ENCODE measurements at regions of chr5 and their contacts with region 1.

Region 1: DNA sequence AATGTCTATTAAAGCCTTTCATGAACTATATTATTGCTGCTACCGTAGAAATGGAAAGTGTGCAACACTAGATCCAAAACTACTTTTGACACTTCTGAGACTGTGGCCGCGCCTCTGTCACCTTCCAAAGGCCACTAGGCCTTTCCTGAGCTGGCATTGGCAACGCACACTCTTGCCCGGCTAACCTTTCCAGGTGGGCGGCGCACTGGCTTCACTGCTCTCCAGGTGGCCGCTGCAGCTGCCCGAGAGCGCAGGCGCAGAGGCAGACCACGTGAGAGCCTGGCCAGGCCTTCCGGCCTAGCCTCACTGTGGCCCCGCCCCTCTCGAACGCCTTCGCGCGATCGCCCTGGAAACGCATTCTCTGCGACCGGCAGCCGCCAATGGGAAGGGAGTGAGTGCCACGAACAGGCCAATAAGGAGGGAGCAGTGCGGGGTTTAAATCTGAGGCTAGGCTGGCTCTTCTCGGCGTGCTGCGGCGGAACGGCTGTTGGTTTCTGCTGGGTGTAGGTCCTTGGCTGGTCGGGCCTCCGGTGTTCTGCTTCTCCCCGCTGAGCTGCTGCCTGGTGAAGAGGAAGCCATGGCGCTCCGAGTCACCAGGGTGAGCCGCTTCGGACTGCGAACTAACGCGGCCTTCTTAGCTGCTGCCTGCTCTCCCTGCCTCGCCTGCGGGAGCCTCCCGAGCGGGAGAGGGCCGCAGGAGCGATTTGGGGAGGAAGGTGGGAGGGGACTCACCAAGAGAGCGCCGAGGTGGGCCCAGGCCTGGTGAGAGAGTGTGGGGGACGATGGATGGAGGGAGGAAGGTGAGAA is at the start of gene CCNB1:
- DNase-seq: peak; percentile 99
- H3K4me3 ChIP-seq: peak within 1 kb of the TSS; percentile 88
- H3K27ac ChIP-seq: peak within 1 kb of the TSS; percentile 53
- H3K4me1 ChIP-seq: peaks cover 4% of the 10 kb centered on the region
- H3K27me3 ChIP-seq: no peaks in the 10 kb centered on the region
- CTCF ChIP-seq: no peak
- total RNA-seq, gene CCNB1: 43.1 to 189 TPM

Region 2: DNA sequence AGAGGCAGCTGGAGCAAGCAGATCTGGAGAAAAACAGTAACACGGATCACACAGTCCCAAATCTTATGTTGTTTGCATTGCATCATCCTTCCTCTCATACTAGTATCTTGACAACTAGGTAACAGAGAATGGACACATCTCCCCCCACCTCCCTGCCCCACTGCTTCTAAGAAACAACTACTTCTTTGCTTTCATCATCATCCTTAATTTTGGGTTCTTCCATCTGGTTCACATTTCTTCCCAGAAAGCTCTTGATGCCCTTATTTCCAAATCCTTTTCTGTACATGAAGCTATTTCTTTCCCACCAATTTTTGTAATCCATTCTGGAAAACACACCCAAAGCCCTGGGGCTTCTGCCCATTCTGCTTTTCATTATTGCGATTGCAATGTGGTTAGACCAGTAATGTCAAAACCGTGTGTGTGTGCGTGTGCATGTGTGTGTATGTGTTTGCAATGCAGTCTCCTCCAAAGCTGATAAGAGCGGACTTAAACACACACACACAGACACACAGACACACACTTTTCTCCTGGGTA is 327.8 kb before region 1 on chr5:
- intact Hi-C with region 1: no loop called
- DNase-seq: no peak
- H3K4me3 ChIP-seq: no peak overlapping the region
- H3K27ac ChIP-seq: no peak overlapping the region
- H3K4me1 ChIP-seq: no peaks in the 10 kb centered on the region
- H3K27me3 ChIP-seq: no peaks in the 10 kb centered on the region
- CTCF ChIP-seq: no peak

Region 3: DNA sequence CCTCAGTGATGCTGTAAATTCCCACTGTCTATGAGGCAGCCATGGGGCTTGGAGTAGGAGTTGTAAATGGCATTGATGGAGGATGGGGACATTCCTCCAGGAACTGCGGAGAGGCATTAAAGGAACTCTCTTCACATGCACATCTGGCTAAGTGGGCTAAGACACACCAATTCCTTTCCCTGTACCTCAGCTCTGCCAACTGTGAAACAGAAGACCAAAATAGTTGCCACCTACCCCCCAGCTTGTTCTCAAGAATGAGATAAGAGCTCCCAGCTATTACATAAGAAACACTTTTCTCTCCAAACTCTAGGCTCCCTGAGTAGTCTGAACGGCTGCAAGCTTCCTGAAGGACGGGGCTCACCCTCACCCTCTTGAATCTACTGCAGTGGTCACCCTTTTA is 217.6 kb before region 1 on chr5:
- intact Hi-C with region 1: no loop called
- DNase-seq: no peak
- H3K4me3 ChIP-seq: no peak overlapping the region
- H3K27ac ChIP-seq: no peak overlapping the region
- H3K4me1 ChIP-seq: no peaks in the 10 kb centered on the region
- H3K27me3 ChIP-seq: no peaks in the 10 kb centered on the region
- CTCF ChIP-seq: no peak

Region 4: DNA sequence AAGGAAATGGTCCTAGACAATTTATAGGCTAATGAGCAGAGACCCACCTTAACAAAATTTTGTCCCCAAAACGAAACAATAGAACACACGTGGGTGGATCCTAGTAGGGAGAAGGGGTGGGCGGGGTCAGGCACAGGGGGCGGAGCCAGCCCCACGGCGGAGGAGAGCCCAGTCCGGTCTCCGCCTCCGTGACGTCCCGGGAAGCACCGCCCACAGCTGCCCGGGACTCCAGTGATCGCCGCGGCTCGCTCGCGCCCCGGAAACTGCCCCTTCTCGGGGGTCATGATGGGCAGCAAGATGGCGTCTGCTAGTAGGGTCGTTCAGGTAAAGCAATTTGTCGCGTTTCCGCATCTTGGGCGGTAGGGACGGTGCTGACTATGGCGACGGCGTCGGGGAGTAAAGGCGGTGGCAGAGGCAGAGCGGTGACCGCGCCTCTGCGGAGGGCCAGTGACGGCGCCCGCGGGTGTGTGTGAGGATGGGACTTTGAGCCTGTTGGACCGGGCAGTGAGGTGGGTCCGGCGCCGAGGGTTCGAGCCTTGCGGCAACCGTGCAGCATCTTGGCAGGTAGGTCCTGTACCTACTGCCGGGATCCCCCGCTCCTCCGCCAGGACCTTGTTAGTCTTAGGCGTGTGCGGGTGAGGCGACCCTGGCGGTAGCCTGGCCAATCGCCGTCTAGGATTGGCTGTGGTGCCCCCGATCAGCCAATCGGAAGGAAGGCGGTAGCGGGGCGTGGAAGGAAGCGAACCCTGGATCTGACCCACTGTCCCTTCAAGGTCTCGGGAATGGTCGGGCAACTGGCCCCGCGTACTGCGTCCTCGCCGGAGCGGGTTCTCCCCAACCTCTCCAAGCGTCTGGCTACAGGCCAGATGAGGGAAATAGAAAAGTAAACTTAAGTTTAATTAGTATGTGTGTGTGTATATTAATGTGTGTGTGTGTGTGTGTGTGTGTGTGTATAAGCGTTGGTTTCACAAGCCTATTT is 50.9 kb after region 1 on chr5:
- intact Hi-C with region 1: loop called (anchors 10 kb)
- DNase-seq: peak; percentile 99
- H3K4me3 ChIP-seq: peak overlapping the region; percentile 72
- H3K27ac ChIP-seq: peak overlapping the region; percentile 93
- H3K4me1 ChIP-seq: peaks cover 8% of the 10 kb centered on the region
- H3K27me3 ChIP-seq: no peaks in the 10 kb centered on the region
- CTCF ChIP-seq: no peak